Right cardiac atrium (tissue), 5 donors: ENCODE measurements at regions of chr18 and their contacts with region 1.

Region 1: GRCh38 chr18:67483237-67483636 is 33.3 kb downstream of the DSEL start:
- DNase-seq: no peak
- ATAC-seq: no peak
- H3K4me3 ChIP-seq: no peak overlapping the region
- H3K27ac ChIP-seq: no peak overlapping the region
- H3K4me1 ChIP-seq: no peaks in the 10 kb centered on the region
- H3K27me3 ChIP-seq: no peaks in the 10 kb centered on the region

Region 2: DNA sequence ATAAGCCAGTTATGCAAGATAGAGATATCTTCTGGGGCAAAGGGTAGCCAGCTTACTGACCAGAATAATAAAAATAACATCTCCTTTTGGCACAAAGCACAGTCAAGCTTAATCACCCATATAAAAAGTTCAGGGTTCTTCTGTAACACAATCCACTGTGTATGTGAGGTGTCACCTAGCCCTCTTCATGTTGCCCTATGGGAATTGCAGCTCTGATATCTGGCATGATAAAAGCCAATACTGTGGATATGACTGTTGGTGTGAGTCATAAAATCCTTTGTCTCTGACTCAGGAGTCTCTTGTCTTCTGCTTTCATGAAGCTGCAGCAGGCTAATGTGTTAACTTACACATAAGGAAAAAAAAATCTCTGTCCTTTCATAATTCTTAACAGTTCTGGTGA is 57.5 kb before region 1 on chr18:
- intact Hi-C with region 1: loop called in 1 of 4 experiments (anchors 10 kb)
- DNase-seq: no peak
- ATAC-seq: no peak
- H3K4me3 ChIP-seq: no peak overlapping the region
- H3K27ac ChIP-seq: no peak overlapping the region
- H3K4me1 ChIP-seq: no peaks in the 10 kb centered on the region
- H3K27me3 ChIP-seq: no peaks in the 10 kb centered on the region